Right ventricle myocardium superior (tissue), 1 donor: ENCODE measurements at regions of chr14 and their contacts with region 1.

Region 1: GRCh38 chr14:20690848-20691523 is 2.4 kb downstream of the ANG start:
- DNase-seq: no peak
- ATAC-seq: peak; percentile 92

Region 2: GRCh38 chr14:20855652-20856291 is 164.8 kb after region 1 on chr14:
- intact Hi-C with region 1: loop called (anchors 2 kb)
- DNase-seq: peak; percentile 48
- ATAC-seq: peak; percentile 94

Region 3: DNA sequence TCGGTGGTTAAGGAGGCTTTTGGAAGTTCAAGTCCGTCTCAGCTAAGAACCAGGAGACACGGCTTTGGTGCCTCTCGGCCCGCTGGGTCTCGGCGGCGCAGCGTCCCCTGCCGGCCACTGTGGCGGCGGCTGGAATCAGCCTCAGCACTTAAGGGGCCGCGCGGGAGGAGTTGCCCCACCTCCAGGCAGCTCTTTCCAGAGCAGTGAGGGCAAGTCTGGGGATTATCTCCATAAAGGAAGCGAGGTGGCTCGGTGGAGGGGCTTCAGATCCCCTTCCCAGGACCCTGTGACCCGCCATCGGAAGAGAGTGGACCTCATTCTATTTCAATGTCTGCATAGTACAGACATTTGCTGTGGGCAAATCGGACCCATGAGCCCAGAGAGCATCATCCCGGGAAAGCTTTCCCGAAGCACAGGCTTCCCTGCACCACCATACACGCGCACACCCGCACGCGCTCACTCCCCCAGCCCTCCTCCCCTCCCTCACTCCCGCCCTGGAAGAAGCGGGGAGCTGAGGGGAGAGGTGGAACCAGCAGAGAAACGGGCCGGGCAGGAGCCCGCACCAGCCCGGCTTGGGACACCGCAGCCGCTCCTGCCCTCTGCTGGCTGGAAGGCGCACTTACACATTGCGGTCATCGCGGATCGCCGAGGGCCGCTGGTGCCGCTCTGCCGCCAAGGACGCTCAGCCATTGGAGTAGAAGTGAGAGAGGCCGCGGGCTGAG is 280.2 kb after region 1 on chr14:
- intact Hi-C with region 1: loop called (anchors 10 kb)
- DNase-seq: peak; percentile 91
- ATAC-seq: peak; percentile 99